ENCODE measurements at regions of chr2 and their contacts with region 1.

Region 1: GRCh38 chr2:95076784-95077529 is 44.7 kb downstream of the MRPS5 start:
- DNase-seq: peak; percentile 75
- H3K4me3 Mint-ChIP-seq: peak overlapping the region; percentile 53
- H3K27ac Mint-ChIP-seq: no peak overlapping the region
- H3K4me1 Mint-ChIP-seq: no peaks in the 10 kb centered on the region
- H3K27me3 Mint-ChIP-seq: peaks cover 22% of the 10 kb centered on the region
- CTCF ChIP-seq: peak; percentile 71

Region 2: DNA sequence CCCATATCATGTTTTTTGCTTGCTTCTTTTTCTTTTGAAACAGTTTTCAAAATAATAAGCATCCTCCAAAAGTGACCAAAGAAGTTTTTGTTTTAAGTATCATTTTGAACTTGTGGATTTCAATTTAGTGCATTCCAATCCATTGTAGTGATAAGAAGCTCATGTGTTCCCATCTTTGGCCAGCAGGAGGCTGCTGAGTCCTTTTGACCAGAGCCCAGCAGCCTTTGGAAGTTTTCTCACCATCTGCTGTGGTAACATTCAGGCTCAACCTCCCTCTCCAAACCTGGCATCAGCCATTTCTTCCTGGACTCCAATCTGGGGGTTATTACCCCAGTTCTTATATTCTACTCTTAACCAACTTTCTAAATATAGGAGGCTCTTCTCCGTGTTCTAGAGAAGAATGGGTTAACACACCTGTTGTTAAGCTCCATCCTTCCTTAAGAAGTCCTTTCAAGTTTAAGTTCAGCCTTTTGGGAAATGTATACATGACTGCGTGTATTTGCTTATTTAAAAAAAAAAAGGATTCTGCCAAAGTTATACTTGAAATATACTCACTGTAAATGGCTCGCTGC is 90.5 kb before region 1 on chr2:
- CTCF ChIA-PET with region 1: interaction called, 17 read pairs
- POLR2A ChIA-PET with region 1: no interaction called
- intact Hi-C with region 1: loop called (anchors 1 kb)
- DNase-seq: peak; percentile 64
- H3K4me3 Mint-ChIP-seq: no peak overlapping the region
- H3K27ac Mint-ChIP-seq: no peak overlapping the region
- H3K4me1 Mint-ChIP-seq: no peaks in the 10 kb centered on the region
- H3K27me3 Mint-ChIP-seq: peaks cover 56% of the 10 kb centered on the region
- CTCF ChIP-seq: peak; percentile 68

Region 3: GRCh38 chr2:95053543-95053942 is 23.4 kb before region 1 on chr2:
- CTCF ChIA-PET with region 1: interaction called, 22 read pairs
- POLR2A ChIA-PET with region 1: no interaction called
- intact Hi-C with region 1: no loop called
- DNase-seq: peak; percentile 10
- H3K4me3 Mint-ChIP-seq: no peak overlapping the region
- H3K27ac Mint-ChIP-seq: no peak overlapping the region
- H3K4me1 Mint-ChIP-seq: no peaks in the 10 kb centered on the region
- H3K27me3 Mint-ChIP-seq: peaks cover 50% of the 10 kb centered on the region
- CTCF ChIP-seq: no peak

Region 4: DNA sequence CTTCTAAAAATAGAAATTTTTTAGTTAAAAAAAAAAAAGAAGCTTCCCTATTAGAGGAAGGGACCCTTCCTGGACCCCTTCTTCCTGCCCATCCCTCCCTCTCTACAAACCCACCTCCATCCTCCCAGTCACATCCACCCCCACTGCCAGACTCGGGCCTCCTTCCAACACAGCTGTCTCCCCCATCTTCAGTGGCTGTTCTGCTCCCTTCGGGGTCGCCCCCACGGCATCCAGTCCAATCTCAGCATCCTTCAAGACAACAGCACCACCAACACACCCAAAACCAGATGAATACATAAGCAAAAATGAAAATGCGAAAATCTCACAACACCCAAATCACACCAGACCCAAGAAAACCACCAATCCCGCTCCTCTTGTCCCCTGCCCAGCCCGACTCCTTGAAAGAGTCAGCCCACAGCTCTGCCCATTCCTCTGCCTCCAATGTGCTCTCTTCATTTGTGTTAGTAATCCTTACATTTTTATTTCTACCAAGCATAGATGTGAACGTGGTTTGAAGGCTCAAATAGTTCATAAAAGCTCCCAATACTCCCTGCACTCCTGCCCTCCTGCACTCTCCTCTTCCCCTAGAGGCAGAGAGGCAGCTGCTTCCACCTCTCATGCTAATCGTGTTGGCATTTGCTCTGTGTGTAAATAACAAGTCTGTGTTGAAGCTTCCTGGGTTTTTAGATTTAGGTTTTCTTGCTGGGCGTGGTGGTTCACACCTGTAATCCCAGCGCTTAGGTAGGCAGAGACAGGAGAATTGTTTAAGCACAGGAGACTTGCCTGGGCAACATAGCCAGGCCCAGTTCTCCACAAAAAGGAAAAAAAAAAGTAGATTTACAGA is 14.5 kb before region 1 on chr2:
- CTCF ChIA-PET with region 1: interaction called, 63 read pairs
- POLR2A ChIA-PET with region 1: interaction called, 4 read pairs
- intact Hi-C with region 1: no loop called
- DNase-seq: no peak
- H3K4me3 Mint-ChIP-seq: no peak overlapping the region
- H3K27ac Mint-ChIP-seq: no peak overlapping the region
- H3K4me1 Mint-ChIP-seq: no peaks in the 10 kb centered on the region
- H3K27me3 Mint-ChIP-seq: peaks cover 50% of the 10 kb centered on the region
- CTCF ChIP-seq: no peak

Region 5: DNA sequence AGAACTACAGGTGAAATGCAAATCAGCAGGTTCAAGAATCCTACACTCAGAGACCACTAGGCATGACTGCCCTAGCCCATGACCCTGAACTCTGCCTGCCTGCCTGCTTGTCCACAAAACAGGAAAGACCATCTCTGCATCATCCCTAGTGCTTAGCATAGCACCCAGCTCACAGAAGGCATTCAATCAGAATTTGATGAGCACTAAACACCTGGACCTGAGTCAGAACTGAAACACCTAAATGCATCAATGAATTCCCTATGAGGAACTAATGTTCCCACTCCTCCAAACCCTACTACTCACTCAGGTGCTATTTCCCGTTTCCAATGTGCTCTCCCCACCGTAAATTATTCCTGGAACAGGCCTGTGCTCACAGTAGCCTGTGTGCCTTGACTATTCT is 23.0 kb after region 1 on chr2:
- CTCF ChIA-PET with region 1: interaction called, 11 read pairs
- POLR2A ChIA-PET with region 1: no interaction called
- intact Hi-C with region 1: no loop called
- DNase-seq: no peak
- H3K4me3 Mint-ChIP-seq: no peak overlapping the region
- H3K27ac Mint-ChIP-seq: no peak overlapping the region
- H3K4me1 Mint-ChIP-seq: no peaks in the 10 kb centered on the region
- H3K27me3 Mint-ChIP-seq: no peaks in the 10 kb centered on the region
- CTCF ChIP-seq: no peak

Region 6: DNA sequence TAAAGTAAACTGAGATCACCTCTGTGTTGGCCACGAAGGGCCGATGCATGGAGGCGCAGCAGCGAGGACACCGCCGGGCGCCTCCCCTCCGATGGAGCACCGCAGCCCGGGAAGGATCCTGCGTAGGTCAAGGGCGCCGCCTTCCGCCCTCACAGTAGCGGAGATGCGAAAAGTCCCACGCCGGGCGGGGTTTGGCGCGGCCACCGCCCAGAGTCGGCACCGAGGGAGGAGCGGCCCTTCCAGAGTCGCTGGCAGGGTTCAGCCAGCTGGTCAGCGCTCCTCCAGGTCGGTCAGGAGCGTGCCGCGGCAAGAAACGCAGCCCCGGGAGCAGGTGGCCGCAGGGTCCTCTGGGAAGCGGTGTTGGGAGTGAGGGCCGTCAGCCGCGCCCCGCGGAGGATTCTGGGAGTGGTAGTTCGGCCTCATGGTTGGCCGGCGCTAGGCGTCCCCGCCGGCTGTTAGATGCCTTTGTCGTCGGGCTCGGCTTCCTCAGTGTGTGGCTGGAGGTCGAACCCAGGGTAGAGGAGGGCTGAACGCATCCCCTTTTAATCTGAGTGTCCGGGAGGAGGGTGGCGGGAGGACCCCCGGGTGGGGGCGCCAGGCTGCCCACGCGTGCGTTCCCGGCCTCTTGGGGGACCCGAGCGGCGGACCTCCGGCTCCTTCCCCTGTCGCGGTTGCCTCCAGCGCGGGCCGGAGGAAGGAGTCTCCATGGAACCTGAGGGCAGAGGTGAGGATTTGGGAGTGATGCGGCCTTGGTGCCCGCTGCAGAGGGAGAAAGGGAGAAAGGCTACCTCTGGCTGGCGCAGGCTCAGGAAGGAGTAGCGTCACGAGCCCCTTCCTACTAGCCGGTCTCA is 130.4 kb after region 1 on chr2 and contains the start of gene ZNF892:
- CTCF ChIA-PET with region 1: interaction called, 3 read pairs
- POLR2A ChIA-PET with region 1: no interaction called
- intact Hi-C with region 1: loop called (anchors 2 kb)
- DNase-seq: peak; percentile 94
- H3K4me3 Mint-ChIP-seq: peak within 1 kb of the TSS; percentile 90
- H3K27ac Mint-ChIP-seq: peak within 1 kb of the TSS; percentile 95
- H3K4me1 Mint-ChIP-seq: peaks cover 16% of the 10 kb centered on the region
- H3K27me3 Mint-ChIP-seq: no peaks in the 10 kb centered on the region
- CTCF ChIP-seq: peak; percentile 61
- total RNA-seq, gene ZNF892: 10.2 and 10.3 TPM in 2 replicates